ENCODE measurements at regions of chr19 and their contacts with region 1.

Region 1: DNA sequence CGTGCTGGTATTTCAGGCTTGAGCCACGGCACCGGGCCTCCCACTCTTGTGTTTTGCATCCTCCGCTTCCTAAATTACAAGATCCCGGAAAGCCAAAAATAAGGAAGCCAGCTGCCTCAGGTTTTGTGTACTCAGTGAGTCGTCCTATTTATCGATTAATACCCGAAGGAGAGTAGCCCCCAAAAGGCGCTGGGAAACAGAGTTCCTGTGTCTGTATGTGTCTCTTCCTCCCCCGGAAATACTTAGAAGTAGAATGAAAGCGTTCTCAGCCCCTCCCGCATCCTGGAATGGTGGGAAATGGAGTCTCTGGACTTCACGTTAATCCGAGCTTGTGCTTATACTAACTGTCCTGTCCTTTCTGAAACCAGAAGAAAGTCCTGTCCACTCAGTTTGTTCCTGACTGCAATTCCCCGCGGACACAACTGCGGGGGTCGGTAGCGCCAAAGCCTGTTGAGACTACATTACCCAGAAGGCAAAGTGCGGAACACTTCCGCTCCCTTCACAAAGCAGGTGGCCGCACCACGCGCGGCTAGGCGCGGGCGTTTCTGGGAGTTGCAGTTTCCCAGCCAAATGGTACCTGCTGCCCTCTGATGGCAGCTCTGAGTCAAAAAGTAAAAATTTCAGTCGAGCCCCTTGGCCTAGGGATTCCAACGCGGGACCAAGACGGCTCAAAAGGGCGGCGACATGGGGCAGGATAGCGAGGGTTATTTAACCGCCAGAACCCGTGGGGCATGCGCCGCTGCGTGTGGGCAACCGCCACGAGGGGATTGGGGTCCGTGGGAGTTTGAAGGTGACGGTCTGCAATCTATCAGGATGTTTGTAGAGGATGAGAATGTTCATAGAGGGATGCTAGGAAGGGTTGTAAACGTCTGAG is 2.2 kb upstream of the GSK3A start:
- DNase-seq: peak; percentile 94 to 95 (median 95)
- ATAC-seq: peak; percentile 54 to 60 (median 56)
- H3K4me3 ChIP-seq: peak overlapping the region; percentile 53 to 88 (median 80)
- H3K27ac ChIP-seq: peak overlapping the region; percentile 75 to 91 (median 83)
- H3K4me1 ChIP-seq: peaks cover 0 to 29% (median 13%) of the 10 kb centered on the region in 4 donors
- H3K27me3 ChIP-seq: no peaks in the 10 kb centered on the region
- CTCF ChIP-seq: peak; percentile 50 to 74 (median 66)
- POLR2A ChIP-seq: peak; percentile 71

Region 2: GRCh38 chr19:42295831-42296525 is 51.4 kb after region 1 on chr19:
- intact Hi-C with region 1: loop called in 1 of 2 experiments (anchors 10 kb)
- DNase-seq: peak; percentile 79 to 84 (median 82)
- ATAC-seq: peak; percentile 77 to 85 (median 80)
- H3K4me3 ChIP-seq: no peak overlapping the region
- H3K27ac ChIP-seq: no peak overlapping the region
- H3K4me1 ChIP-seq: peaks cover 0 to 9% (median 0%) of the 10 kb centered on the region in 4 donors
- H3K27me3 ChIP-seq: no peaks in the 10 kb centered on the region
- CTCF ChIP-seq: peak; percentile 82 to 93 (median 90)
- POLR2A ChIP-seq: no peak

Measured in right lobe of liver (tissue), 6 donors.